ENCODE measurements at regions of chr5 and their contacts with region 1.

Region 1: GRCh38 chr5:141557681-141558136 is 61.1 kb downstream of the DIAPH1 start:
- DNase-seq: peak; percentile 84
- H3K4me3 Mint-ChIP-seq: no peak overlapping the region
- H3K27ac Mint-ChIP-seq: peak overlapping the region; percentile 47
- H3K4me1 Mint-ChIP-seq: peaks cover 25% of the 10 kb centered on the region
- H3K27me3 Mint-ChIP-seq: no peaks in the 10 kb centered on the region

Region 2: GRCh38 chr5:141320225-141321169 is 237.2 kb before region 1 on chr5 and contains the start of gene TAF7:
- CTCF ChIA-PET with region 1: interaction called, 16 read pairs
- POLR2A ChIA-PET with region 1: interaction called, 14 read pairs
- intact Hi-C with region 1: no loop called
- DNase-seq: peak; percentile 95
- H3K4me3 Mint-ChIP-seq: peak within 1 kb of the TSS; percentile 98
- H3K27ac Mint-ChIP-seq: peak within 1 kb of the TSS; percentile 99
- H3K4me1 Mint-ChIP-seq: peaks cover 23% of the 10 kb centered on the region
- H3K27me3 Mint-ChIP-seq: no peaks in the 10 kb centered on the region
- total RNA-seq, gene TAF7: 54.6 to 55.5 TPM

Region 3: DNA sequence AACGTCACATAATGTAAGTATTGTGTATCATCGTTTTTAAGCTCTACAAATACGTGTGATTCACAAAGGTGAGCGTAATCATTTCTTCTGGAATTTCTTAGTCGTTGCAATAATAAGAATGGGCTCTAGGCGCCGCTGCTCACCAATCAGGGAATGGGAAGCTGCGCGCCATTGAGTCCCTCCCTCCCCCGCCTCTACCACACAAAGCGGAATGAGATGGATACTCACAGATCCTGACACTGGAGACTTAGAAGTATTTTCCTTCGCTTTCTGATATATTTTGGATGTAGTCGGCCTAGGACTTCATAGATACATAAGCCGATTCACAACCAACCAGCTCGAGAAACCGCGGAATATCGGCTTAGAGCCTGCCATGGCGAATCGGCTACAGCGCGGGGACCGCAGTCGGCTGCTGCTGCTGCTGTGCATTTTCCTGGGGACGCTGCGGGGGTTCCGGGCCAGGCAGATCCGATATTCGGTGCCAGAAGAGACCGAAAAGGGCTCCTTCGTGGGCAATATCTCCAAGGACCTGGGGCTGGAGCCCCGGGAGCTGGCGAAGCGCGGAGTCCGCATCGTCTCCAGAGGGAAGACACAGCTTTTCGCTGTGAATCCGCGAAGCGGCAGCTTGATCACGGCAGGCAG is 136.7 kb before region 1 on chr5 and contains the start of gene PCDHGA11:
- CTCF ChIA-PET with region 1: interaction called, 11 read pairs
- POLR2A ChIA-PET with region 1: no interaction called
- intact Hi-C with region 1: no loop called
- DNase-seq: peak; percentile 66
- H3K4me3 Mint-ChIP-seq: peak within 1 kb of the TSS; percentile 72
- H3K27ac Mint-ChIP-seq: no peak within 1 kb of the TSS
- H3K4me1 Mint-ChIP-seq: peaks cover 4% of the 10 kb centered on the region
- H3K27me3 Mint-ChIP-seq: peaks cover 68% of the 10 kb centered on the region
- total RNA-seq, gene PCDHGA11: 0.05 TPM in 1 of 2 experiments, not detected in the other

Region 4: DNA sequence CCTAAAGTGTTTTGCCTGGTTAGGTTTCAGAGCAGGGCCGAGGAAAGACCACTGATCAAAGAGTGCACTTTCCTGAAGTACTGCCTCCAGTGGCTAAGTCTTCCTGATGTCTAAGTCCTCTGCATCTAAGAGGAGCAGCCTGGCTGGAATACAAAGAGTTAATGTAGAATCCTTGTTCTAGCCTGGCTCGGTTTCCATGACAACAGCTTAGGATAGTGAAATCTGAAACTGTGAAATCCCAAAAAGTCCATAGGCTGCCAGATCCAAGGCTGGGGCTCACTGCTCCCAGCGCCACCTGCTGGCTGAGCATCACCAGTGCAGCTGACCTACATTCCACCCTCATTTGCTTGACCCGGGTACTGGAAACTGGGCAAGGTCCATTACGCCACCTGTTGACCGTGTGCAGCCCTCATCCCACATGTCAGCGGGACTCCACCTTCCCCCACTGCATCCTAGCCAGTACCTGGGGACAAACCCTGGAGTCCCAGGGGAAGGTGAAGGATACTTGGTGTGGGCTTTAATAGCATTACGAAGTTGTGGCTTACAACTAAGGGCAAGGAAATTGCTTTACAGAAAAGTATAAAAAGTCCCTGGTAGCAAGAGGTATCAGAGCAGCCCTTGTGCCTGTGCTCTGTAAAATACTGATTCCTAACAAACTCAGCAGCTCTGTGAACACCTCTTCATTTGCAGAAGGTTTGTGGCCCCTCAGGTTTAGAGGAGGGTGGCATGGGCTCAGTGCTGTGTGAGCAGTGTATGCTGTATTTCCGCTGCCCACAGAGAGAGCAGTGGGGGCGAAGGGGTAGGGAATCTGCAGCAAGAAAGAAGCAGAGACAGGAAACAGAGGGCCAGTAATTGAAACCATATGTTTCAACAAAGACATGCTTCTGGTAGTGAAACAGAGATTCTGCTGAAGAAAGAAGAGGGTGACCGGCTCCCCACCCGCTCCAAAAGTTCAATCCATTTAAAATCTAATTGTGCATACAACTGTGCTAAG is 32.8 kb before region 1 on chr5:
- CTCF ChIA-PET with region 1: interaction called, 34 read pairs
- POLR2A ChIA-PET with region 1: no interaction called
- intact Hi-C with region 1: loop called (anchors 2 kb)
- DNase-seq: peak; percentile 60
- H3K4me3 Mint-ChIP-seq: no peak overlapping the region
- H3K27ac Mint-ChIP-seq: peak overlapping the region; percentile 15
- H3K4me1 Mint-ChIP-seq: peaks cover 36% of the 10 kb centered on the region
- H3K27me3 Mint-ChIP-seq: no peaks in the 10 kb centered on the region

Region 5: GRCh38 chr5:141532726-141533125 is 25.0 kb before region 1 on chr5:
- CTCF ChIA-PET with region 1: interaction called, 23 read pairs
- POLR2A ChIA-PET with region 1: no interaction called
- intact Hi-C with region 1: no loop called
- DNase-seq: no peak
- H3K4me3 Mint-ChIP-seq: no peak overlapping the region
- H3K27ac Mint-ChIP-seq: no peak overlapping the region
- H3K4me1 Mint-ChIP-seq: peaks cover 4% of the 10 kb centered on the region
- H3K27me3 Mint-ChIP-seq: no peaks in the 10 kb centered on the region

Region 6: DNA sequence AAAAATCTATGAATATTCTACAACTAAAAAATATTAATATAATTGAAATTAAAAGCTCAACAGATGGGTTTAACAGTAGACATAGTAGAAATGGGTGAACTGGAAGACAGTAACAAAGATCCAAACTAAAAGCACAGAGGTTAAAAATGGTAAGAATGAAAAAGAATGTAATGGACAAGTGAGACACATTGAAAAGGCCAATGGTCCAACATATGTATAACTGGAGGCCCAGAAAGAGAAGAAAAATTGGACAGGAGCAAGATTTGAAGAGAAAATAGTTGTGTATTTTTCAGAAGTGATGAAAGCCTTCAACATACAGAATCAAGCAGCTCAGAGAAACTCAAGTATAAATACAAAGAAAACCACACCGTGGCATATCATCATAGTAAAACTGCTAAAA is 10.2 kb before region 1 on chr5:
- CTCF ChIA-PET with region 1: interaction called, 15 read pairs
- POLR2A ChIA-PET with region 1: no interaction called
- intact Hi-C with region 1: no loop called
- DNase-seq: no peak
- H3K4me3 Mint-ChIP-seq: no peak overlapping the region
- H3K27ac Mint-ChIP-seq: no peak overlapping the region
- H3K4me1 Mint-ChIP-seq: peaks cover 21% of the 10 kb centered on the region
- H3K27me3 Mint-ChIP-seq: no peaks in the 10 kb centered on the region

Region 7: DNA sequence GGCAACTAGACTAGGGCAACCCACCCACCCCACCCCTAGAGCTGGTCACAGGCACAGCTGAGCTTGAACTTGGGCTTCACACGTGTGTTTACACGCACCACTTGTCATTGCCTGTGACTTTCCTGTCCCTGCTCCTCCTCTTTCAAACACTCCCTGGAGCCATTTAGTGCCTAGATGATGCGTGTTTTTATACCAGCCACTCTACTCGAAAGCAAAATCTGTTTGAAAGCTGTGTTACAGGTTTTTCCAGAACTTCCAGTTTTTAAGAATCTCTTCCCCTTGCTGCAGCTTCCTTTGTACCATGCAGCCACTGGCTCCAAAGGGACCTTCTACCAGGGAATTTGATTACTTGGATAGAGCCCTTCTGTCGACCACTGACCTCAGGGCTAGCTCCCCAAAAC is 845.9 kb after region 1 on chr5:
- CTCF ChIA-PET with region 1: no interaction called
- POLR2A ChIA-PET with region 1: no interaction called
- intact Hi-C with region 1: no loop called
- DNase-seq: no peak
- H3K4me3 Mint-ChIP-seq: no peak overlapping the region
- H3K27ac Mint-ChIP-seq: no peak overlapping the region
- H3K4me1 Mint-ChIP-seq: no peaks in the 10 kb centered on the region
- H3K27me3 Mint-ChIP-seq: no peaks in the 10 kb centered on the region

Measured in activated CD4-positive, alpha-beta memory T cell treated with anti-CD3 and anti-CD28 coated beads for 36 hours (primary cell).